ENCODE measurements at regions of chr3 and their contacts with region 1.

Region 1: DNA sequence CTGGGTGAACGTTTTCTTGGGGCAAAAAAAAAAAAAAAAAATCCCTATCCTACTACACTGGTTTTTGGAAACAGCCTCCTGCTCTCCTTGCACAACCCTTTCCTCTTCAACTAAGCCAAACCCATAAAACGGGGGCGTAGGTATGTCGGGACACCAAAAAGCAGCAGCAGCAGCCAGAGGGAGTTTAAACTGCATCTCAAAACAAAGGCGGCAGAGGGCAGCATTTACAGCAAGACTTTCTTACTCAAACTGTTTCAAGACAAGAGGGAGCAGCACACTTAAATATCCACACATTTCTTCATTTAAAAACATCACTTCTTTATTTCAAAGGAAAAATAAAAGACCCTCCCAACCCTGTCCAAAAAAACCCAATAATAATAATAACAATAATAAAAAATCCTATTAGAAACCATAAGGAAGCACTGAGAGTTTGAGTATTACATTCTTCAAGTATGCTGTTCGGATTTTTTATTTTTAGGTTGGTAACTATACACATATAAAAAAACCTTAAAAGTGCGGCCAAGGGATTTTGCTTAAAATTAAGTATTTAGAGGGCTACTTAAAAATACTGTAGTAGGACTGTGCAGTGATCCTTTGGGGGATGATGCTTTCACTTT is 43.9 kb upstream of the PLXND1 start:
- DNase-seq: no peak
- ATAC-seq: peak; percentile 91
- H3K4me3 ChIP-seq: no peak overlapping the region
- H3K27ac ChIP-seq: no peak overlapping the region
- H3K4me1 ChIP-seq: peaks cover 28% of the 10 kb centered on the region
- H3K27me3 ChIP-seq: no peaks in the 10 kb centered on the region
- CTCF ChIP-seq: peak; percentile 70

Region 2: DNA sequence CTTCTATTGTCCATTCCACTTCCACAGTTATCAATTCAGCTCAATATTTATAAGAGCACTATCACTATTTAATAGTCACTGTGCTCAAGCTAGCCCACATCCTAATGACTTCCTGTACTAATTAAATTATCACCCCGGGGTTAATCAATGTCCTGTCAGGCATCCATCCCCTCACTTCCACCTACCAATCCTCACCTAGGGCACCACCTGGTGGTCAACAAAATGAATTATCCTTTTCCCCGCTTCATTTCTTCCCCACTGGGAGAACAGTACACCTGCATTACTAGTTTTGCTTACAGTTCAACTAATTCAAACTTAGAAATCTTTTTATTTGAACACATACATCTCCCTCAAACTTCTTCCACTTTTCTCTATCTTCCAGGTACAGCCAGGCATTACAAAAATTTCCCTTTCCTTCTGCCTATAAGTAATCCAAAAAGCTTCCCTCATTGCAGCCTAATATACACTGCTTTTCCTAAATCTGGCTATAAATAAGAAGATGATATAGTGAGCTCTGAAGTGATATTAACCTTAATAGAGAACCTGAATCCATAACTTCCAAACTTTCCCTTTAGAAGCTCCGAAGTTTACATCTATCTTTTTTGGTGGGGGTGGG is 174.7 kb after region 1 on chr3:
- intact Hi-C with region 1: loop called (anchors 10 kb)
- DNase-seq: no peak
- ATAC-seq: peak; percentile 84
- H3K4me3 ChIP-seq: no peak overlapping the region
- H3K27ac ChIP-seq: no peak overlapping the region
- H3K4me1 ChIP-seq: peaks cover 15% of the 10 kb centered on the region
- H3K27me3 ChIP-seq: no peaks in the 10 kb centered on the region
- CTCF ChIP-seq: peak; percentile 72